Activated naive CD8-positive, alpha-beta T cell treated with anti-CD3 and anti-CD28 coated beads, Interleukin-2, amount 10 ng/mL, durations not matched to agents 7 days and 5 days (primary cell): ENCODE measurements at regions of chr12 and their contacts with region 1.

Region 1: GRCh38 chr12:107402041-107403022 is 283.3 kb upstream of the PWP1 start:
- DNase-seq: peak; percentile 61
- ATAC-seq: peak; percentile 49
- H3K4me3 Mint-ChIP-seq: no peak overlapping the region
- H3K27ac Mint-ChIP-seq: peak overlapping the region; percentile 43
- H3K4me1 Mint-ChIP-seq: peaks cover 47% of the 10 kb centered on the region
- H3K27me3 Mint-ChIP-seq: no peaks in the 10 kb centered on the region

Region 2: GRCh38 chr12:107311682-107312081 is 90.7 kb before region 1 on chr12:
- POLR2A ChIA-PET with region 1: no interaction called
- DNase-seq: no peak
- ATAC-seq: no peak
- H3K4me3 Mint-ChIP-seq: no peak overlapping the region
- H3K27ac Mint-ChIP-seq: no peak overlapping the region
- H3K4me1 Mint-ChIP-seq: peaks cover 16% of the 10 kb centered on the region
- H3K27me3 Mint-ChIP-seq: peaks cover 40% of the 10 kb centered on the region

Region 3: DNA sequence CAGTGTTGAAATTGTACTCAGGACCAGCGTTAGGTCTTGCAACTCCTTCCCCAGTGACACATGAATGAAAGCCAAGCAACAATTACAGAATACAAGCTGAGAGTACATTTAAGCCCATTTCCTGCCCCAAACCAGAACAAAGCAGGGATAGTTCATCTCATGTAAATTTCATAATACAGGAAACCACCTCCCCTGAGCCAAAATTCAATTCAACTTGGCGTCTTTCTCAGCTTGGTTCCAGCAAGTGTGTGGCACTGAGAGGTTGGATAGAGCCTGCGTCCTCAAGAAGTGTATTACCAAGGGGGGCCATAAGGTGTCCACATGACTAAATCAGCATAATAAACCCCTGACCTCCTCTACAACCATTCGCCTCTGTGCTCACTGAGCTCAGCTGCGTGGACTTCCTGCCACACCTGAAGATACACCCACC is 30.1 kb before region 1 on chr12:
- POLR2A ChIA-PET with region 1: interaction called, 10 read pairs
- DNase-seq: peak; percentile 53
- ATAC-seq: peak; percentile 56
- H3K4me3 Mint-ChIP-seq: peak overlapping the region; percentile 71
- H3K27ac Mint-ChIP-seq: peak overlapping the region; percentile 94
- H3K4me1 Mint-ChIP-seq: peaks cover 73% of the 10 kb centered on the region
- H3K27me3 Mint-ChIP-seq: no peaks in the 10 kb centered on the region